Endothelial cell of umbilical vein (primary cell): ENCODE measurements at regions of chr3 and their contacts with region 1.

Region 1: GRCh38 chr3:28726840-28727239 is 378.2 kb upstream of the AZI2 start:
- DNase-seq: peak; percentile 59
- H3K4me3 ChIP-seq: no peak overlapping the region
- H3K27ac ChIP-seq: no peak overlapping the region
- H3K4me1 ChIP-seq: no peaks in the 10 kb centered on the region
- H3K27me3 ChIP-seq: no peaks in the 10 kb centered on the region
- CTCF ChIP-seq: peak; percentile 61 to 75
- POLR2A ChIP-seq: no peak

Region 2: DNA sequence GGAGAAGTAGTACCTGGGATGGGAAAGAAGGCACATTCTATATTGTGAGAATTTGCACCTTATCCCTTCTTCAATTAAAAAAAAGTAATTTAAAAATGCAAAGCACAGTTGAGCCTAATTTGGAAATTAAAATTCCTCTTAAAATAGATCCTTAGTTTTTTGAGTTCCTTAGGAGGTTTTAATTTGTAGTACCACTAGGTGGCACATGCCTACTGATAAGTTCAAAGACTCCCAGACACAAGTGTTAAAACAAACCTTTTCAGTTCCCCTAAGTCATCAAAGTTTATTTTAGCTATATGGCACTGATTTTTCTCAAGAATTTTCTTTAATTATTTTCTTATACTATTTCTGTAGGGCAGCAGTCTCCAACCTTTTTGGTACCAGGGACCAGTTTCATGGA is 250.6 kb before region 1 on chr3:
- CTCF ChIA-PET with region 1: interaction called, 9 read pairs
- POLR2A ChIA-PET with region 1: no interaction called
- dilution Hi-C with region 1: no loop called
- intact Hi-C with region 1: loop called (anchors 1 kb)
- DNase-seq: peak; percentile 41
- H3K4me3 ChIP-seq: no peak overlapping the region
- H3K27ac ChIP-seq: no peak overlapping the region
- H3K4me1 ChIP-seq: no peaks in the 10 kb centered on the region
- H3K27me3 ChIP-seq: no peaks in the 10 kb centered on the region
- CTCF ChIP-seq: peak; percentile 31 to 45
- POLR2A ChIP-seq: no peak

Region 3: GRCh38 chr3:28699283-28699682 is 27.6 kb before region 1 on chr3:
- CTCF ChIA-PET with region 1: interaction called, 10 read pairs
- POLR2A ChIA-PET with region 1: no interaction called
- dilution Hi-C with region 1: no loop called
- intact Hi-C with region 1: no loop called
- DNase-seq: no peak
- H3K4me3 ChIP-seq: no peak overlapping the region
- H3K27ac ChIP-seq: no peak overlapping the region
- H3K4me1 ChIP-seq: no peaks in the 10 kb centered on the region
- H3K27me3 ChIP-seq: no peaks in the 10 kb centered on the region
- CTCF ChIP-seq: no peak
- POLR2A ChIP-seq: no peak